Cardiac septum (tissue), 1 donor: ENCODE measurements at regions of chr2 and their contacts with region 1.

Region 1: GRCh38 chr2:121649596-121650314 is 493 bp upstream of the CLASP1 start:
- DNase-seq: peak; percentile 97

Region 2: DNA sequence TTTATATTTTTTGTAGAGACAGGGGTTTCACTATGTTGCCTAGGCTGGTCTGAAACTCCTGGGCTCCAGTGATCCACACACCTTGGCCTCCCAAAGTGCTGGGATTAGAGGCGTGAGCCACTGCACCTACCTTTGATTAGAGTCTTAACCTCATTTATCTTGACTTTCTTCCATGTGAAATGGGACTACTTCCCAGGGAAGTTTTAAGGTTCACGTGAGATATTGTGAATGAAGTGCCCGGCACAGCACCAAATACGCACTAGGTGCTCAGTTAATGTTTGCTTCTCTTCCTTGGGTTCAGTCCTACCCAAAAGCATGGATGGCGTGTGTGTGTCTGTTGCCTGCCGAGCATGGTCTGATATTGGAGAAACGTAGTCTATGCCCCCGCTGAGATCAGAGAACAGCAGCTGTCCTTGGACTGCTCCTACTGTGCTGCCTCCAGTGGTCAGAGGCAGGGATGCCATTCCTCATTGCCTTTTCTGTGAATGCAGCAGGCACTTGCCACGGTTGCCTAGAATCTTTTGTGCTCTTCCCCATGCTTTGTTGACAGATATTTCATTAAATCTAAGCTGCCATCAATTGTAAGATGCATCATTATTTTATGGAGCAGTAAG is 352.4 kb before region 1 on chr2:
- intact Hi-C with region 1: no loop called
- DNase-seq: peak; percentile 72

Region 3: GRCh38 chr2:121599963-121600651 is 49.6 kb before region 1 on chr2:
- intact Hi-C with region 1: loop called (anchors 5 kb)
- DNase-seq: no peak

Region 4: GRCh38 chr2:121710470-121711170 is 60.9 kb after region 1 on chr2:
- intact Hi-C with region 1: loop called (anchors 10 kb)
- DNase-seq: no peak